ENCODE measurements at regions of chr1 and their contacts with region 1.

Region 1: GRCh38 chr1:72282271-72283021 is at the start of gene NEGR1:
- DNase-seq: peak; percentile 25
- ATAC-seq: peak; percentile 88
- H3K4me3 ChIP-seq: peak within 1 kb of the TSS; percentile 50 to 73 (median 56)
- H3K27ac ChIP-seq: no peak within 1 kb of the TSS
- H3K4me1 ChIP-seq: peaks cover 24% of the 10 kb centered on the region
- H3K27me3 ChIP-seq: peaks cover 0 to 35% of the 10 kb centered on the region in 2 experiments; a peak in 4 of 5 replicates
- CTCF ChIP-seq: 0 out of 2 replicates have a peak, but pooled peaks have one; percentile 10
- EP300 ChIP-seq: no peak
- POLR2A ChIP-seq: no peak
- RAD21 ChIP-seq: no peak
- total RNA-seq, gene NEGR1: not detected in 2 replicates

Region 2: GRCh38 chr1:72186733-72187307 is 95.6 kb before region 1 on chr1:
- CTCF ChIA-PET with region 1: no interaction called
- POLR2A ChIA-PET with region 1: no interaction called
- in situ Hi-C with region 1: no loop called
- intact Hi-C with region 1: loop called (anchors 2 kb)
- DNase-seq: peak; percentile 1
- ATAC-seq: peak; percentile 71
- H3K4me3 ChIP-seq: no peak overlapping the region
- H3K27ac ChIP-seq: no peak overlapping the region
- H3K4me1 ChIP-seq: no peaks in the 10 kb centered on the region
- H3K27me3 ChIP-seq: no peaks in the 10 kb centered on the region
- CTCF ChIP-seq: peak; percentile 54
- EP300 ChIP-seq: no peak
- POLR2A ChIP-seq: no peak
- RAD21 ChIP-seq: no peak

Region 3: DNA sequence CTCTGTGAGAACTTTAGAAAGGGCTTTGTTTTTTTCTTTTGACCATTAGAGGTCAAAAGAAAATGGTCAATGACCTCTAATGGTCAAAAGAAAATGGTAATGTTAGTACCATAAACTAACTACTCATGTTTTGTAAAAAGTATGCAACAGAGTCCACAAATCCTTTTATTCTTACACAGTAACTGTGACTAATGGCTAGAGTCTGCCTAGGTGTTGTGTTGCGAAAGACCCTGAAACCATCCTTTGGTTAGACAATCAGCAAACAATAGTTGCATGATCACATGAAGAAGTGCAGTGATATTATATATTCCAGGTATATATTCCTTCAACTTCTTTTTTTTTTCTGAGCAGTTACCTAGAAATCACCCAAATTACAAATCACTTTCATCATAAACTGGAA is 41.0 kb before region 1 on chr1:
- CTCF ChIA-PET with region 1: no interaction called
- POLR2A ChIA-PET with region 1: no interaction called
- in situ Hi-C with region 1: no loop called
- intact Hi-C with region 1: loop called (anchors 2 kb)
- DNase-seq: peak; percentile 54
- ATAC-seq: peak; percentile 76
- H3K4me3 ChIP-seq: no peak overlapping the region
- H3K27ac ChIP-seq: no peak overlapping the region
- H3K4me1 ChIP-seq: peaks cover 15% of the 10 kb centered on the region; the same call in 1 of the 2 replicates
- H3K27me3 ChIP-seq: no peaks in the 10 kb centered on the region
- CTCF ChIP-seq: no peak
- EP300 ChIP-seq: peak in 1 of 2 experiments; percentile 21; a peak in 1 of 4 replicates
- POLR2A ChIP-seq: no peak
- RAD21 ChIP-seq: no peak

Region 4: GRCh38 chr1:72485801-72486200 is 203.4 kb after region 1 on chr1:
- CTCF ChIA-PET with region 1: no interaction called
- POLR2A ChIA-PET with region 1: no interaction called
- in situ Hi-C with region 1: no loop called
- intact Hi-C with region 1: loop called (anchors 5 kb)
- DNase-seq: no peak
- ATAC-seq: no peak
- H3K4me3 ChIP-seq: no peak overlapping the region
- H3K27ac ChIP-seq: no peak overlapping the region
- H3K4me1 ChIP-seq: peaks cover 63% of the 10 kb centered on the region
- H3K27me3 ChIP-seq: no peaks in the 10 kb centered on the region
- CTCF ChIP-seq: no peak
- EP300 ChIP-seq: no peak
- POLR2A ChIP-seq: no peak
- RAD21 ChIP-seq: no peak